Activated CD4-positive, alpha-beta T cell treated with anti-CD3 and anti-CD28 coated beads for 36 hours (primary cell): ENCODE measurements at regions of chr9 and their contacts with region 1.

Region 1: DNA sequence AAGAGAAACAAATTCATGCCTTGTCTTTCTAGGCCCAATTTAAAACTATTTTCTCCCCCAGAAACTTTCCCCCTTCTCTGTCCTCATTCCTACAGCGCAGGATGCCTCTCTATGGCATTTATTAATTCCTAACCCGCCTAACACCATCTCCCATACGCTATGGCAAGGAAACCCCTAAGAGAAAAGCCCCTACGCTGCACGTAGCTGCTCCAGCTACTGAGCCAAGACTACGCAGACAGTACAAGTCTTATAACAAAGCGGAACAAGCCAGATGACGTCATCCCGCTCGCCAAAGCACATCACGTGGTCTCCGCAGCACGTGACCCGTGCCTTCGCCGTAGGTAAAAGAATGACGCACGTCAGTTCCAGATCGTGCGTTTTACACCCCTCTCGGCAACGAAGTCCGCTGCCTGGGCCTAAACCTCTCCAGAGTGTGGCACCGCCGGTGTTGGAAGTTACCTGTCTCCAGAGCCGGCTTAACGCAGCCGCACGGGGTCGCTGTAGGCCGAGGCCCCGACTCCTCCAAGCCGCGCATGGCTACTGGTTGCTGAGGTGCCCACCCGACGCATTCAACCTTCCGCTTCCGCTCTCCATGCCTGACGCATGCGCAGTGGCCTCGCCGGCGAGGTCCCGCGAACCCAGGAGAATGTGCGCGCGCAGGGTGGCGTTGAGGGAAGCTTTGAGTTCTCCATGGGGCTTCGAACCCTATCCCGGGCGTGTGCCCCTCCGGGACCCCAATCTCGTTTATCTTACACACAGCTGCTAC is at the start of gene TRMO:
- DNase-seq: peak; percentile 99
- ATAC-seq: peak; percentile 78
- H3K4me3 Mint-ChIP-seq: peak within 1 kb of the TSS; percentile 82
- H3K27ac Mint-ChIP-seq: peak within 1 kb of the TSS; percentile 99
- H3K4me1 Mint-ChIP-seq: peaks cover 36% of the 10 kb centered on the region
- H3K27me3 Mint-ChIP-seq: no peaks in the 10 kb centered on the region
- total RNA-seq, gene TRMO: 13.9 to 20.7 TPM

Region 2: DNA sequence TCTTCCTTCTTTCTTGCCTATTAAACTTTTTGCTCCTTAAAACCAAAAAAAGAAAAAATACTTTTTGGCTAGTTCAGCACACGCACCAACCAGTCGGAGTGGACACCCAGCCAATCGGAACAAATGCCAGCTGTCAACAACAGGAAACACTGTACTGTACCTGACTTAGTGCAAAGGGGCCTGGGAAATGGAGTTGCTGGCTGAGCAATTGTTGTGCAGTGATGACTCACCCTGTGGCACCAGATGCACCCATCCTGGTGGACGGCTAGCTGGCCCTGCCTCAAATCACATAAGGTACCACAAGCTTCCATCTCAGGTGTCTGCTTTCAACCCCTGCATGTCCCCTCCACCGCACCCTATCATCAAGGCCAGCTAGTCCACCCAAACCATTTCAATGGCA is 48.3 kb before region 1 on chr9:
- CTCF ChIA-PET with region 1: no interaction called
- POLR2A ChIA-PET with region 1: no interaction called
- intact Hi-C with region 1: no loop called
- DNase-seq: no peak
- ATAC-seq: peak; percentile 57
- H3K4me3 Mint-ChIP-seq: no peak overlapping the region
- H3K27ac Mint-ChIP-seq: no peak overlapping the region
- H3K4me1 Mint-ChIP-seq: no peaks in the 10 kb centered on the region
- H3K27me3 Mint-ChIP-seq: peaks cover 8% of the 10 kb centered on the region

Region 3: DNA sequence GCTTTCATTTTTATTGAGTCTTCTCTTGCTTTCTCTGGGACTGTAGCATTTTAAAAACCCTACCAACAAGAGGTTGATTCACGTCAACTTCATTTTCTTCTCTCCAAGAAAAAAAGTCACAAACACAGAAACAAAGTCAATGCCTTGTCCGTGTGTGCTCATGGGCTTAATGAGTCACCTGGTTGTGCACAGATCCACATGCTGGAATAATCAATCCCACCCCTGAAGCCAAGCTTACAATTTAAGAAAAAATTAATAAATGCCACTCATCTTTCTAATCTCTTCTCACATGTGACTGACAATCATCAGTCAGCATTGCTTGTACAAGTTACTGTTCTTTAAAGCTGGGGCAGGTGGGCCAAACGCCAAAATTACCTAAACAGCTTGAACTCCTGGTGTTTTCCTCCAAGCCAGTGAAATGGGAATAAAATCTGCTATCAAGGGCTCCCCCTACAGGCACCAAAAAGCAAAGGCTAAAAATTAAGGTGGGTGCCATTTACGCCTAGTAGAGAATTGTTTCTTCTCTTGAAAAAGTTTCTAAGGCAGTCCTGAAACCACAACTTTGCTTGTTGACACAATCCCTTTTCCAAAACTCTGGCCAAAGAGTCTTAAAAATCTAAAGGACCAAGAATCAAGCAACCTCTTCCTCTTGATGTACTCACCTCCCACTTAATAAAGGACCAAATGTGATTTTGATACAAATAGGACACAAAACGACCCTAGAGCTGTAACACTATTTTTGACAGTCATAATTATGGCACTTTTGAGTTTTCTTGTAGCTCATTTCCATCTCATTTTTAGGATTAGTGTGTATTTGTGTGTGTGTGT is 21.2 kb before region 1 on chr9:
- CTCF ChIA-PET with region 1: interaction called, 74 read pairs
- POLR2A ChIA-PET with region 1: interaction called, 7 read pairs
- intact Hi-C with region 1: loop called (anchors 1 to 2 kb)
- DNase-seq: no peak
- ATAC-seq: no peak
- H3K4me3 Mint-ChIP-seq: no peak overlapping the region
- H3K27ac Mint-ChIP-seq: peak overlapping the region; percentile 56
- H3K4me1 Mint-ChIP-seq: peaks cover 53% of the 10 kb centered on the region
- H3K27me3 Mint-ChIP-seq: no peaks in the 10 kb centered on the region

Region 4: GRCh38 chr9:97954550-97954989 is 32.4 kb after region 1 on chr9:
- CTCF ChIA-PET with region 1: interaction called, 49 read pairs
- POLR2A ChIA-PET with region 1: no interaction called
- intact Hi-C with region 1: loop called (anchors 1 kb)
- DNase-seq: peak; percentile 69
- ATAC-seq: peak; percentile 90
- H3K4me3 Mint-ChIP-seq: no peak overlapping the region
- H3K27ac Mint-ChIP-seq: no peak overlapping the region
- H3K4me1 Mint-ChIP-seq: peaks cover 9% of the 10 kb centered on the region
- H3K27me3 Mint-ChIP-seq: no peaks in the 10 kb centered on the region

Region 5: GRCh38 chr9:98056269-98057137 is 134.4 kb after region 1 on chr9 and contains the start of gene NANS:
- CTCF ChIA-PET with region 1: interaction called, 13 read pairs
- POLR2A ChIA-PET with region 1: interaction called, 5 read pairs
- intact Hi-C with region 1: loop called (anchors 1 kb)
- DNase-seq: peak; percentile 97
- ATAC-seq: peak; percentile 94
- H3K4me3 Mint-ChIP-seq: peak within 1 kb of the TSS; percentile 94
- H3K27ac Mint-ChIP-seq: peak within 1 kb of the TSS; percentile 98
- H3K4me1 Mint-ChIP-seq: peaks cover 28% of the 10 kb centered on the region
- H3K27me3 Mint-ChIP-seq: no peaks in the 10 kb centered on the region
- total RNA-seq, gene NANS: 45.9 to 47.7 TPM

Region 6: GRCh38 chr9:98207606-98208005 is 285.5 kb after region 1 on chr9:
- CTCF ChIA-PET with region 1: no interaction called
- POLR2A ChIA-PET with region 1: no interaction called
- intact Hi-C with region 1: loop called in 1 of 2 experiments (anchors 5 kb)
- DNase-seq: no peak
- ATAC-seq: no peak
- H3K4me3 Mint-ChIP-seq: no peak overlapping the region
- H3K27ac Mint-ChIP-seq: no peak overlapping the region
- H3K4me1 Mint-ChIP-seq: peaks cover 2% of the 10 kb centered on the region
- H3K27me3 Mint-ChIP-seq: no peaks in the 10 kb centered on the region